ENCODE measurements at regions of chr5 and their contacts with region 1.

Region 1: DNA sequence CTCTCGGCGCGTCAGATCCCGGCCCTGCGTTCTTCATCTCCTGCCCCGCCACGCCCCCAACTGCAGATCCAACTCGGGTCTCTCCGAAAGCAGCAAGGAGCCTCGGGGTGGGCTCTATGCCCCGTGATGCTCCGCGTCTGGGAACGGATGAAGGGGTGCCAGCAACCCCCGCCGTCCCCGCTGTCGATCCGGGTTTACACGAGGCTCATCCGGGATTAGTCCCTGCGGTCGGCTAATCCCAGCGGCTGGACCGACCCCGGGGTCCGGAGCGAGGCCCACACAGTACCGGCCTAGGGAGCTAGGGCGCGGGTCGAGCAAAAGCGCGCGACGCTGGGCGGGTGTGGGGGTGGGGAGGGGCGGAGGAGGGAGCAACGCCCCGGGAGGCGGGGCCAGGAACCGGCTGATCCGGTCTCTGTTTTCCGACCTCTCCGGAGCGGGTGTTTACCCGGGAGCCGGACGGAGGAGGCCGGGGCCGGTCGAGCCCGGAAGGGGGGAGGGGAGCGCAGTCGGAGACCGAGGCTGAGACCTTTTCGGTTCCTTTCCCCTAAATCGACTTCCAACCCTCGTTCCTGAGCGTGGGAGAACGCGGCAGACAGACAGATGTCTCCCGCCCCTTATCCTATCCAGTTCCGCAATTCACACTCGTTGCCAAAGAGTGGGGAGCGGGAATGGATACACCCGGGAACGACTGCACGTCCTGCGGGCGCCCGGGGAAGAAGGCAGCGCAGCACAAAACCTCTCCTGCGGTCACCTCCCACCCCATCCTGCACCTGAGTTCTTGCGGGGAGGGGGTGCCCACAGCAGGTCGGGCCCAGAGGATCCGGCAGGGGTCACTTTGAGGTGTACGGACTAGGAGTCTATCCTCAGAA is 28.6 kb downstream of the PCDH1 start:
- DNase-seq: peak; percentile 66
- H3K4me3 Mint-ChIP-seq: peak overlapping the region; percentile 85
- H3K27ac Mint-ChIP-seq: peak overlapping the region; percentile 84
- H3K4me1 Mint-ChIP-seq: peaks cover 14% of the 10 kb centered on the region
- H3K27me3 Mint-ChIP-seq: no peaks in the 10 kb centered on the region

Region 2: DNA sequence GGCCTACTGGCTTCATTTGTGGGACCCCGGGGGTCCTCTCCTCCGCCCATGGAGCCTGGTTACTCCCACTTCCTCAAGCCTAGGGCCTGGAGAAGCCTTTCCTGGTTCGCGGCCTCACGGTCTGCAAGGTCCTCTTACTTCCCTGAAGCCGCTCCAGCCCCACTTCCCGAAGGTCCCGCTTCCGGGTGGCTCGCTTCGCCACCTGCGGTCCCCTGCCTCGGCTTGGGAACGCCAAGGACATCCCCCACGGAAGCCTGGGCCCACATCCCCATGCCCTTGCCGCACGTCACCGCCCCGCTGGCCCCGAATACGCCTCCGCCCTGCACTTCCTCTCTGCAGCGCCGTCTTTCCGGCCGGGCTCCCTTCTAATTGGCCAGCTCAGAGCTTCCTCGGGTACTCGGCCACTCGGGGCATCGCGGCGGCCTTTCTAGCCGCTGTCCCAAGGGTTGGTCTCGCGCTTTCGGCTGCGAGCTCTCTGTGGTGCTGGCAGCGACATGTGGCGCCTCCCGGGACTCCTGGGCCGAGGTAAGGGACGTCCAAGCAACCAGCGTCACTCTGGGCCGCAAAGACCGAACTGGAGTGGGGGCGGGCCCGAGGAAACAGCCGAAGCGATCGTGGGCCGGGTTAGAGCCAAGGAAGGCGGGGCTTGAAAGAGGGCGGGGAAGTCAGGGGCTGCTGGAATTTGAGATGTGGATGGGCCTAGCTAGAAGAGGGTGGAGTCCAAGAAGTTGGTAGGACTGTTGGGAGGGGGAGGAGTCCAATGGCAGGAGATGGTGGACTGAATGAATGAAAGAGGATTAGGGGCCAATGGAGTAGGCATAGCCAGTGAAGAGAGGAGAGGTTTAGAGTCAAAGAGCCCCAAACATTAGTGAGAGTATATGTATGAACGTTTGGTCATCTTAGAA is 74.1 kb after region 1 on chr5 and contains the start of gene DELE1:
- intact Hi-C with region 1: loop called (anchors 5 kb)
- DNase-seq: peak; percentile 91
- H3K4me3 Mint-ChIP-seq: peak within 1 kb of the TSS; percentile 88
- H3K27ac Mint-ChIP-seq: peak within 1 kb of the TSS; percentile 89
- H3K4me1 Mint-ChIP-seq: peaks cover 13% of the 10 kb centered on the region
- H3K27me3 Mint-ChIP-seq: no peaks in the 10 kb centered on the region
- total RNA-seq, gene DELE1: 74.1 and 76.8 TPM in 2 replicates

Measured in activated T-helper 2 cell treated with anti-CD3 and anti-CD28 coated beads, Interferon-gamma antibody, Interleukin-2, Interleukin-4, amounts not matched to agents 10 μg/mL and 5 μg/mL and 100 μg/mL, durations not matched to agents 14 hours and 24 hours and 36 hours (primary cell).